T-cell (primary cell): ENCODE measurements at regions of chr6 and their contacts with region 1.

Region 1: GRCh38 chr6:3297909-3298308 is 39.2 kb downstream of the PSMG4 start:
- DNase-seq: no peak
- ATAC-seq: no peak
- H3K4me3 ChIP-seq: no peak overlapping the region
- H3K4me3 Mint-ChIP-seq: no peak overlapping the region
- H3K27ac ChIP-seq: no peak overlapping the region
- H3K27ac Mint-ChIP-seq: no peak overlapping the region
- H3K4me1 ChIP-seq: no peaks in the 10 kb centered on the region
- H3K4me1 Mint-ChIP-seq: no peaks in the 10 kb centered on the region
- H3K27me3 ChIP-seq: peaks cover 0 to 28% of the 10 kb centered on the region in 2 experiments
- H3K27me3 Mint-ChIP-seq: peaks cover 0 to 10% of the 10 kb centered on the region in 2 donors

Region 2: GRCh38 chr6:3013479-3013878 is 284.4 kb before region 1 on chr6:
- CTCF ChIA-PET with region 1: no interaction called
- POLR2A ChIA-PET with region 1: no interaction called
- DNase-seq: peak in 1 of 35 experiments; percentile 33
- ATAC-seq: peak in 1 of 4 experiments; percentile 23
- H3K4me3 ChIP-seq: no peak overlapping the region
- H3K4me3 Mint-ChIP-seq: no peak overlapping the region
- H3K27ac ChIP-seq: no peak overlapping the region
- H3K27ac Mint-ChIP-seq: no peak overlapping the region
- H3K4me1 ChIP-seq: peaks cover 0 to 4% of the 10 kb centered on the region in 2 experiments
- H3K4me1 Mint-ChIP-seq: peaks cover 0 to 5% (median 0%) of the 10 kb centered on the region in 3 donors
- H3K27me3 ChIP-seq: no peaks in the 10 kb centered on the region
- H3K27me3 Mint-ChIP-seq: no peaks in the 10 kb centered on the region

Region 3: GRCh38 chr6:3094815-3095214 is 203.1 kb before region 1 on chr6:
- CTCF ChIA-PET with region 1: no interaction called
- POLR2A ChIA-PET with region 1: interaction called in 1 of 2 experiments, 11 read pairs
- DNase-seq: no peak
- ATAC-seq: no peak
- H3K4me3 ChIP-seq: no peak overlapping the region
- H3K4me3 Mint-ChIP-seq: no peak overlapping the region
- H3K27ac ChIP-seq: no peak overlapping the region
- H3K27ac Mint-ChIP-seq: no peak overlapping the region
- H3K4me1 ChIP-seq: no peaks in the 10 kb centered on the region
- H3K4me1 Mint-ChIP-seq: peaks cover 0 to 2% (median 0%) of the 10 kb centered on the region in 3 donors
- H3K27me3 ChIP-seq: no peaks in the 10 kb centered on the region
- H3K27me3 Mint-ChIP-seq: no peaks in the 10 kb centered on the region

Region 4: DNA sequence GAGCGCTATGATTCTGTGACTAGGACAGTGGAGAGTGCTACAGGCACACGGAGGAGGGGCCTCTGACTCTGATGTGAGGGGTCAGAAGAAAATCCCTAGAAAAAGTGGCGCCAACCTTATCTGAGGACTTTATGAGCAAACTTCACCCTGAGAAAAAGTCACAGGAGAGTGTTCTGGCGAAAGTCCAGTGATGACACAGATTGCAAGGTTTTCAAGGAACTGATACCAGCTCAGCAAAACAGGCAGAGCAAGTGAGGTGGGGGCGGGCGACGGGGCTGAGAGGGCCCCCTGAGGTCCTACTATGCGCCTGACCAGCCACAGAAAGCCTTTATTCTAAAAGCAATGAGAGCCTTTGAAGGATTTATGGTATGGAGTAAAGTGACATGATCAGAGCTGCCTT is 85.6 kb after region 1 on chr6:
- CTCF ChIA-PET with region 1: no interaction called
- POLR2A ChIA-PET with region 1: no interaction called
- DNase-seq: no peak
- ATAC-seq: no peak
- H3K4me3 ChIP-seq: no peak overlapping the region
- H3K4me3 Mint-ChIP-seq: no peak overlapping the region
- H3K27ac ChIP-seq: no peak overlapping the region
- H3K27ac Mint-ChIP-seq: no peak overlapping the region
- H3K4me1 ChIP-seq: peaks cover 2 to 8% of the 10 kb centered on the region in 2 experiments
- H3K4me1 Mint-ChIP-seq: peaks cover 5 to 14% (median 9%) of the 10 kb centered on the region in 3 donors
- H3K27me3 ChIP-seq: peaks cover 0 to 21% of the 10 kb centered on the region in 2 experiments
- H3K27me3 Mint-ChIP-seq: peaks cover 0 to 2% of the 10 kb centered on the region in 2 donors